ENCODE measurements at regions of chr6 and their contacts with region 1.

Region 1: DNA sequence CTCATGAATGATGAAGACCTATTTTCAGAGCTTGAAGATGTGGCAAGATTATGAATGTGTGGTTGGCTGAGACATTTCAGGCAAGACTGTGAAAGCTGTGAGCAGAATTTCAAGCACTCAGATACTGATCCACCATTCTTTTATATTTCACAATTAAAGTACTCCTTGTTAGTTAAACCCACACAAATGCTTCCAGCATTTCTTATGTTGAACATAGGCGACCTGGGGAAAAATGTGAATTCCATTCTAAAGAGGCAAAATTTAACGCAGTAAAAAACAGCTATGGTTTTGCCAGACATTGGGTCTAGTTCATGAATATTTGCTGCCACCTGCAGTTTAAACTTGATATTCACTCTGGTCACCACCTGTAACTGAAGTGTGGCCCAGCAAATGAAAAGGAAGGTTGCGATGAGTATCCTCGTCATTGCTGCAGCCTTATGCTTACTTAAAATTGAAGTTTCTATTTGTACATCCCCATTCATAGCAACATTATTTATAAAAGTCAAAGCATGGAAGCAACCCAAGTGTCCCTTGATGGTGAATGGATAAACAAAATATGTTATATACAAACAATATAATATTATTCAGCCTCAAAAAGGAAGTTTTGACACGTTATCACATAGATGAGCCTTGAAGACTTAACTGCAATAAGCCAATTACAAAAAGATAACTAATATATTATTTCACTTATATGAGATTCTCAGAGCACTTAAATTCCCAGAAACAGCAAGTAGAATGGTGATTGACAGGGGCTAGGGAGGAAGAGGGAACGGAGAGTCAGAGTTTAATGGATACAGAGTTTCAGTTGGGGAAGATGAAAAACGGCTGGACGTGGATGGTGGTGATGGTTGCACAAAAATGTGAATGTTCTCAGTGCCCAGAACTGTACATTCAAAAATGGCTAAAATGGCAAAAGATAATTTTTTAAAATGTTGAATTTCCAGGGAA is 32.4 kb upstream of the FAM184A start:
- DNase-seq: no peak
- H3K4me3 ChIP-seq: no peak overlapping the region
- H3K27ac ChIP-seq: no peak overlapping the region
- H3K4me1 ChIP-seq: no peaks in the 10 kb centered on the region
- H3K27me3 ChIP-seq: no peaks in the 10 kb centered on the region
- CTCF ChIP-seq: peak; percentile 72 to 87 (median 72)
- POLR2A ChIP-seq: no peak

Region 2: GRCh38 chr6:118968416-118968815 is 142.5 kb before region 1 on chr6:
- intact Hi-C with region 1: loop called (anchors 5 kb)
- DNase-seq: no peak
- H3K4me3 ChIP-seq: no peak overlapping the region
- H3K27ac ChIP-seq: no peak overlapping the region
- H3K4me1 ChIP-seq: no peaks in the 10 kb centered on the region
- H3K27me3 ChIP-seq: no peaks in the 10 kb centered on the region
- CTCF ChIP-seq: peak in 1 of 3 experiments; percentile 48
- POLR2A ChIP-seq: no peak

Measured in vagina (tissue), 2 donors.